Activated CD8-positive, alpha-beta memory T cell treated with anti-CD3 and anti-CD28 coated beads, Interleukin-2, amount 10 ng/mL, durations not matched to agents 7 days and 5 days (primary cell): ENCODE measurements at regions of chr5 and their contacts with region 1.

Region 1: DNA sequence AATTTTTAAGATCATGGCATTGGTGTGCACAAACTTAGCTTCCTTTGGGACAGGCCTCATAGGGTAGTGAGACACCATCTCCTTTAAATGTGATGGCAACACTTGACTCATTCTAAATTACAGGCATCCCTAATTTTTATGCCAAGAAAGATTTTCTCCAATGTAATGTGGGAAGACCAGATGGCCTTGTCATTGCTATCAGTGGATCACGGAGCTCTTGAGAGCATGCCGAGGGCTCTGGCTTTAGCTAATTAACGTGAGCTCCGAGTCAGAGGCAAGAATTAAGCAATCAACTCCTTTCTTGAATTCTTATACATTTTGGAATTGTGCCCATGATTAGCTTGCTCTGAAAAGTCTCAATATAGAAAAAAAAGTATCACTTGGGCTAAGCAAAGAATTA is 215.8 kb downstream of the LRRC70 start:
- DNase-seq: no peak
- ATAC-seq: no peak
- H3K4me3 Mint-ChIP-seq: no peak overlapping the region
- H3K27ac Mint-ChIP-seq: no peak overlapping the region
- H3K4me1 Mint-ChIP-seq: no peaks in the 10 kb centered on the region
- H3K27me3 Mint-ChIP-seq: no peaks in the 10 kb centered on the region

Region 2: DNA sequence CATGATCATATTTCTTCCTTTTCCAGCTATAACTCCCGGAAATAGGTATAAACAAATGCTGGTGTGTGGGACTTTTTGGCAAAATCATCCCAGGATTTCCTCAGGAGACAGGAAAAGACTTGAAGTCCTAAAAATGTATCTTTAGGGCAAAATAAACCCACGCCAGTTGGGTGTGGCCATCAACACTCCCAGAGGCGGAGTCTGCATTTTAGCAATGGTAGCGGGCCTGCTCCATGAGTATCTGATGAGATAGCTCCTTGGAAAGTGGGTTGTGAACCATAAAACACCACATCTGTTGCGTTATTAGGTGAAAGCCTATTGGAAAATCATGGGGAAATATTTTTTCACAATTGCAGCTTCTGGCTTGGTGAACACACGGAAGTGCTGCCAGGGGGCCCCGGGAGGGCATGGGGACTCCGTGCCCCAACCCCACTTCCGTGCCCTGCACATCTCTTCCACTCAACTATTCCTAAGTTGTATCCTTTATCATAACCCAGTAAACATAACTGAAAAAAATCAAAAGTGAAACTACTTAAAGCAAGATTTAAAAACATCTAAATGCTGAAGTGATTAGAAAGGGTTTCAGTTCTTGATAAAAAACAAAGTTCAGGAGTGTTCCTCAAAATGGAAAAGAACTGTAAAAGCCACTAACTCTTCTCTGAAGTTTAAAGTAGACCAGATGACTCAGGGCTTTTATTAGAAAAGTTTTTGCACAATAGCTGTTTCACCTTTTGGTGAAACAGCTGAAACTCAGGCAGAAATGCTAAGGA is 104.7 kb before region 1 on chr5:
- CTCF ChIA-PET with region 1: no interaction called
- DNase-seq: no peak
- ATAC-seq: no peak
- H3K4me3 Mint-ChIP-seq: peak overlapping the region; percentile 38
- H3K27ac Mint-ChIP-seq: no peak overlapping the region
- H3K4me1 Mint-ChIP-seq: peaks cover 4% of the 10 kb centered on the region
- H3K27me3 Mint-ChIP-seq: no peaks in the 10 kb centered on the region

Region 3: DNA sequence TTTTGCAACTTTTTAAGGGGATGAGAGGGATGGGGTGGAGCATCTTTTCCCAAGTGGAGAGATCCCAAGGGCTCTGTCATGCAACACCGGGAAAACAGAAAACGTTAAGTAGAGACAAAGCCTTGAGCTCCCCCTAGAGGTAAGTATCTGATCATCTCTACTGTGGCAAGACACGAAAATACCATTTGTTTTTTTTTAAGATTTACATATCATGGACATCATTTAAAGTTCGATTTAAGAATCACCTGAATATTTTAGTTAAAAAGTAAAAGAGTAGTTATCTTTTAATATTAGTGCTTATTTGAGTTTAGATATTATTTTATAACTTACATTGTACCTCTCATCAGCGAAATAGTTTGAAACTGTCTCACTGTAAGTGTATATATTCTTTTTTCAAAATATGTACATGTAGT is 15.4 kb before region 1 on chr5:
- CTCF ChIA-PET with region 1: interaction called, 12 read pairs
- DNase-seq: no peak
- ATAC-seq: peak; percentile 65
- H3K4me3 Mint-ChIP-seq: no peak overlapping the region
- H3K27ac Mint-ChIP-seq: no peak overlapping the region
- H3K4me1 Mint-ChIP-seq: peaks cover 7% of the 10 kb centered on the region
- H3K27me3 Mint-ChIP-seq: peaks cover 3% of the 10 kb centered on the region